ENCODE measurements at regions of chr4 and their contacts with region 1.

Region 1: DNA sequence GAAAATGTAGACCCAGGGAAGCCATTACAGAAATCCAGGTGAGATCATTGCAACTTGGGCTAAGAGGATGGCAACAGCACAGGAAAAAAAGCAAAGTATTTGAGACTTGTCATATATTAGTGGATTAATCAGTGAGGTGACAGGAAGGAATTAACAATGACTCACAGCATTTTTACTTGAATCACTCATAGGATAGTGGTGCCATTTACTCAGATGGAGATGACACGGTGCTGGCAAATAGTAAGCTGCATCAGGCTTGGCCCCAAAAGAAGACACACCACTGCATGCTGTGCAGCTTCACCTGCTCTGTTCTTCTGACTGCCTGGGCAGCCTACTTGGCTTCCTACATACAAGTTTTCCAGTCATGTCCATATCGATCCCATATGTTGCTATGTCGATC is 144.8 kb downstream of the FRYL start:
- DNase-seq: no peak

Region 2: DNA sequence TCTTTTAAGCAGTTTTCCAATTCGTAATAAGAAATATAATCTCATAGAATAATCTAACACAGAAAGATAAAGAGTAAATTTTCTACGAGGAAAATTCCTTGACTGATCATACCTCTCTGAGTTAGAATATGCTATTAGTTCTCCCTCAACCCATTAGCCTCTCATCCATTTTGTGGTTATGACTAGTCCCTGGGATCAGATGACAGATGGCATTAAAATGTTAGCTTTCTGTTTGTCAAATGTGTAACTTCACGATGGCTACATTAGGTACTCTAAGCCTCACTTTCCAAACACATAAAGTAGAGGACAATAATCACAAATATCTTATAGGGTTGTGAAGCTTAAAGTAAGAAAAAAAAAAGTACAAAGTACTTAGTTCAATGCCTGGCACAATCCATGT is 33.1 kb before region 1 on chr4:
- intact Hi-C with region 1: loop called (anchors 5 kb)
- DNase-seq: no peak

Region 3: GRCh38 chr4:48681856-48682255 is 46.5 kb after region 1 on chr4:
- intact Hi-C with region 1: no loop called
- DNase-seq: no peak

Measured in cardiac septum (tissue), 1 donor.